ENCODE measurements at regions of chr19 and their contacts with region 1.

Region 1: DNA sequence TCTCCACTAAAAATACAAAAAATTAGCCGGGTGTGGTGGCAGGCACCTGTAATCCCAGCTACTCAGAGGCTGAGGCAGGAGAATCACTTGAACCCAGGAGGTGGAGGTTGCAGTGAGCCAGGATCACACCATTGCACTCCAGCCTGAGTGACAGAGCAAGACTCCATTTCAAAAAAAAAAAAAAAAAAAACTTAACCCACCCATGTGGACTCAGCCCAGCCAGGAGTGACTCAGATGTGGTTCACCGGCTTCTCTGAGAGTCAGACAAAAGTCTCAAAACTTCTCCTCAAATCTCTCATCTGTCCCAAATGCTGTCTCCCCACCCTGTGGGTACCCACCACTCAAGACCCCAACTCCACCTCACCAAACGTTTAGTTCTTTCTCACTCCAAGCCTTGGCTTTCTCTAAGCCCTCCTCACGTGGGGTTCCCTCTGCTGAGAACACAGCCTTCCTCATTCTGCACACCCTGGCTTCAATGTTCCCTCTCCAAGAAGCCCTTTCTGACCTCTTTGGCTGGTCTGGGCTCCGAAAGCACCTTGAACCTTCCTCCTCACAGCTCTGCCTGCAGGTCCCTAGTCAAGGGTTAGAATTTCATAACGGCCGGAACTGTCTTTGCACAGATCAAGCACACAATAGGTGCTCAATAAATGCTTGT is 11.1 kb upstream of the RAB3A start:
- DNase-seq: no peak
- ATAC-seq: no peak
- H3K4me3 ChIP-seq: no peak overlapping the region
- H3K27ac ChIP-seq: no peak overlapping the region
- H3K4me1 ChIP-seq: no peaks in the 10 kb centered on the region
- H3K27me3 ChIP-seq: no peaks in the 10 kb centered on the region
- CTCF ChIP-seq: no peak

Region 2: GRCh38 chr19:18251587-18252369 is 36.9 kb after region 1 on chr19:
- intact Hi-C with region 1: loop called in 1 of 3 experiments (anchors 5 kb)
- DNase-seq: peak; percentile 42 to 90 (median 76)
- ATAC-seq: peak; percentile 44 to 85 (median 75)
- H3K4me3 ChIP-seq: no peak overlapping the region
- H3K27ac ChIP-seq: no peak overlapping the region
- H3K4me1 ChIP-seq: no peaks in the 10 kb centered on the region
- H3K27me3 ChIP-seq: no peaks in the 10 kb centered on the region
- CTCF ChIP-seq: peak; percentile 85 to 95 (median 92)

Region 3: GRCh38 chr19:18259893-18260292 is 45.0 kb after region 1 on chr19:
- intact Hi-C with region 1: loop called in 2 of 3 experiments (anchors 5 to 10 kb)
- DNase-seq: no peak
- ATAC-seq: no peak
- H3K4me3 ChIP-seq: no peak overlapping the region
- H3K27ac ChIP-seq: no peak overlapping the region
- H3K4me1 ChIP-seq: no peaks in the 10 kb centered on the region
- H3K27me3 ChIP-seq: no peaks in the 10 kb centered on the region
- CTCF ChIP-seq: no peak